ENCODE measurements at regions of chr11 and their contacts with region 1.

Region 1: DNA sequence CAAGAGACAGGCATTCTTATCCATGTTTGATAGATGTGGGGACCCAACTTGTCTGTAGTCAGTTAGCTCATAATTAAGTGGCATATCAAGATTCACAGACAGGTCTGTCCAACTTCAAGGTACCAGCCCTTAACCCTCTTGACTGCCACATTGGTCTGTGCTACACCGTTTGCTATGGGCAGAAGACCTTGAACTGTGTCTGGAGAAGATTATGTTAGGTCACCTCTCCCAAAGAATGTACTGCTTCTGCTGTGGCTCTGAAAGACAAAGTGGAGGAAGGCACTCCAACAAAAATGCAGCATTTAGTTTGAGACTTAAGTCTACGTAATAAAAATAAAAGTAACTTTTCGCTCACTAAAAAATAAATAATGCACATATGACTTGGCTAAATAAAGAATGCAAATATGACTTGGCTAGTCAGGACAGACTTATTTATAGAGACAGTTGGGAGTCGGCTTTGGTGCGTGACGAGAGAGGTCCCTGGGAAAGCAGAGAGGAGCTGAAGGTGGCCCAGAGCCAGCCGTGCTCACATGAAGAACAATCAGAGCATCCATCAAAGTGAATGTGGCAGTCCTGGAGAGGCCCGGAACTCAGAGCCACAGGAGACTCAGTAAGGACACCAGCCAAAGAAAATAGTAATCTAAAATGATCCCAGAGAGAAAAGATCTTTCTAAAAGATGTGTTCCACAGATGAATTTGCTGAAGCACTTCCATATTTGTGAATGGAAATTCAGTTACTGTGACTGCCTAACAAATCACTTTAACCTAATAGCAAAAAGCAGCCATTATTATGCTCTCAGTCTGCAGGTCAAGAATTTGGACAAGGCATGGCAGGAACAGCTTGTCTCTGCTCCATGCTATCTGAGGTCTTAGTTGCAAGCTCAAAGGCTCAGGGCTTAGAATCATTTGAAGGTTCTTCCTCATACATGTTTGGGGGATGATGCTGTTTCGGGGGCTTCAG is 35.0 kb downstream of the CWC15 start:
- DNase-seq: peak; percentile 82
- ATAC-seq: peak; percentile 91

Region 2: DNA sequence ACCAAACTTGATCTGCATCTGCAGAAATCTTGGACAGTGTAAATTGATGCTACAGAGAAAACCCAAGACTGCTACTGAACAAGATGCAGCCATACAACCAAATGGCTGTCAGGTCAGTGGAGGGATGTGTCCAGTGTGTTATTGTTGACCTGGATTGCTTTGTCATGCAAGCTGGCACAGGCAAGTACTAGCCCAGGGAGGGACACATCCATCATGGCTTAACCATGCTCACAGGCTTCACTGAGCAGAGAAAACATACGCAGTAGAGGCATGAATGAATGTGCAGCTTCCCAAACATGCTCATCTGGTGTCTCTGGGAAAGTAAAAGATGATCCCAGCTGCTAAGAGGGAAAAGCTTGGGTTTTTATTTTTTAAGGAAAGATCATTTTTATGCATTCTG is 1875.3 kb before region 1 on chr11:
- intact Hi-C with region 1: loop called (anchors 5 kb)
- DNase-seq: no peak
- ATAC-seq: no peak